H1 (cell line): ENCODE measurements at regions of chr18 and their contacts with region 1.

Region 1: GRCh38 chr18:3585656-3586509 is 135.9 kb downstream of the TGIF1 start:
- DNase-seq: peak; percentile 63 to 84
- H3K4me3 ChIP-seq: no peak overlapping the region
- H3K27ac ChIP-seq: no peak overlapping the region
- H3K4me1 ChIP-seq: peaks cover 3 to 13% (median 9%) of the 10 kb centered on the region in 4 experiments
- H3K27me3 ChIP-seq: no peaks in the 10 kb centered on the region
- CTCF ChIP-seq: peak; percentile 86 to 96 (median 91)
- EP300 ChIP-seq: no peak
- POLR2A ChIP-seq: no peak
- RAD21 ChIP-seq: peak; percentile 88 to 92

Region 2: DNA sequence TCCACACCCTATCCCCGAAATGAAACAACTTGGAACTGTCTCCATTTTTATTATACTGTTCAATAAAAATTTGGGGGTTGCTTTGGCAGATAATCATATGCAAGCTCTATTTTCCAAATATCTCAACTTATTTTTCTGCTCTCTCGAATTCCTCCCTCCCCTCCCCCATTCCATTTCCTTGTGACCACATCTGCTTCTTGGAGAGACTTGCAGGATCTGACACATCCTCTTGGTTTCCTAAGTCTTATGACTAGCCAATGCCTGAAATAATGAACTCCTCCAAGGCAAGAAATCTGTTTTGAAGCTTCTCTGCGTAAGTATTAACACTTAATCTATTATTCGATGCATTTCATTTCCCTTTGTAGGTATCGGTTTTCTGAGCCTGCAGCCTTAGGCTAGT is 119.8 kb before region 1 on chr18:
- CTCF ChIA-PET with region 1: interaction called, 42 read pairs
- POLR2A ChIA-PET with region 1: interaction called, 7 read pairs
- DNase-seq: no peak
- H3K4me3 ChIP-seq: no peak overlapping the region
- H3K27ac ChIP-seq: no peak overlapping the region
- H3K4me1 ChIP-seq: peaks cover 7 to 19% (median 9%) of the 10 kb centered on the region in 4 experiments; a peak in 6 of 7 replicates
- H3K27me3 ChIP-seq: no peaks in the 10 kb centered on the region
- CTCF ChIP-seq: no peak
- EP300 ChIP-seq: no peak
- POLR2A ChIP-seq: no peak
- RAD21 ChIP-seq: no peak

Region 3: DNA sequence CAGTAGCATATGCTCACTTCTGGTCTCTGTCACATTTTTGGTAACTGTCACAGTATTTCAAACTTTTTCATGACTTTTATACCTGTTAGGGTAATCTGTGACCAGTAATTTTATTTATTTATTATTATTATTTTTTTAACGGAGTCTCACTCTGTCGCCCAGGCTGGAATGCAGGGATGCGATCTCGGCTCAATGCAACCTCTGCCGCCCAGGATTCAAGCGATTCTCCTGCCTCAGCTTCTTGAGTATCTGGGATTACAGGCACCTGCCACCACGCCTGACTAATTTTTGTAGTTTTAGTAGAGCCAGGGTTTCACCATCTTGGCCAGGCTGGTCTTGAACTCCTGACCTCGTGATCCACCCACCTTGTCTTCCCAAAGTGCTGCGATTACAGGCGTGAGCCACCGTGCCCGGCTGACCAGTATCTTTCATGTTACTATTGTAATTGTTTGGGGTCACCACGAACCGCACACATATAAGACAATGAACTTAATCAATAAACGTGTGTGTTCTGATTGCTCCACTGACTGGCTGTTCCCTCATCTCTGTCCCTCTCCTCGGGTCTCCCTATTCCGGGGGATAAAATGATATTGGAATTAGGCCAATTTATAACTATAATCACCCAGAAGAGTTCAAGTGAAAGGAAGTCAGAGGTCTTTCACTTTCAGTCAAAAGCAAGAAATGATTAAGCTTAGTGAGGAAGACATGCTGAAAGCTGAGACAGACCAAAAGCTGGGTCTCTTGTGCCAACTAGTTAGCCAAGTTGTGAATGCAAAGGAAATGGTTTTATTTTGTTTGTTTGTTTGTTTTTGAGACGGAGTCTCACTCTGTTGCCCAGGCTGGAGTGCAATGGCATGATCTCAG is 113.0 kb before region 1 on chr18:
- CTCF ChIA-PET with region 1: interaction called, 42 read pairs
- POLR2A ChIA-PET with region 1: interaction called, 7 read pairs
- DNase-seq: no peak
- H3K4me3 ChIP-seq: no peak overlapping the region
- H3K27ac ChIP-seq: no peak overlapping the region
- H3K4me1 ChIP-seq: peaks cover 0 to 5% (median 4%) of the 10 kb centered on the region in 4 experiments; a peak in 5 of 7 replicates
- H3K27me3 ChIP-seq: no peaks in the 10 kb centered on the region
- CTCF ChIP-seq: no peak
- EP300 ChIP-seq: no peak
- POLR2A ChIP-seq: no peak
- RAD21 ChIP-seq: no peak

Region 4: DNA sequence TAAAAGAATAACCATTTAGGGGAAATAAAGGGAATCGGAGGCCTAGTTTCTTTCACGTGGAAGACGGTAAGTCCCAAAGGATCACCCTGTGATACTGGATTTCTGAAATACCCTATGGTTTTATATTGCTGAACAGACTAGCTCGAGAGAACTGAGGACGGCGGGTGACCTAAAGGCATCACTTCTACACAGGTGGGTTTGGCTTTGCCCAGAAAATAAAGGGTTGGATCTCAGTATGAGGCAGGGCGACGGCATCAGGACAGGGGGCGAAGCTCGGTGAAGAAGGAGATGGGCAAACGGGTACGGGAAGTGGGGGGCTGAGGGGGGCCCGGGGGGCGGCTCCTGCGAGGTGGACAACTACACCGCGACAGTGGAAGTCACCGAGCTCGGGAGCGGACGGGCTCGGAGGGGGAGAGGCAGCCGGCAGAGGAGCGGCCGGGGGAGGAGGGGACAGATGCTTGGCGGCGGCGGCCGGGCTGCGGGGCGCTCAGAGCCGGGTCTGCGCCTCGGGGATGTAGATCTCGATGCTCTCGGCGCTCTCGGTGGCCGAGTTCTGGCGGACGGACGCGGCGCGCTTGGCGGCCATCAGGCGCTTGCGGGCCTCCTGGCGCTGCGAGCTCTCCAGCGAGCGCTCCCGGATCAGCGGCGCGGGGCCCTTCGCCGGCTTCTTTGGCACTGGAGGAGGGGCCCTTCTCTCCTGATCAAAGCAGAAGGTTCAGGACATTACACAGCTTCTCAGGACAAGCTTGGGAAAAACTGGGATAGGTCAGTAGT is 87.0 kb before region 1 on chr18:
- CTCF ChIA-PET with region 1: interaction called, 6 read pairs
- POLR2A ChIA-PET with region 1: interaction called, 12 read pairs
- DNase-seq: peak in 1 of 2 experiments; percentile 78
- H3K4me3 ChIP-seq: peak overlapping the region; percentile 32 to 60 (median 37); a peak in 7 of 8 replicates
- H3K27ac ChIP-seq: no peak overlapping the region
- H3K4me1 ChIP-seq: peaks cover 1 to 13% (median 5%) of the 10 kb centered on the region in 4 experiments
- H3K27me3 ChIP-seq: no peaks in the 10 kb centered on the region; a peak in 3 of 7 replicates
- CTCF ChIP-seq: 0 out of 4 replicates have a peak, but pooled peaks of 1 of the 3 experiments have one; percentile 1
- EP300 ChIP-seq: no peak
- POLR2A ChIP-seq: no peak
- RAD21 ChIP-seq: no peak

Region 5: DNA sequence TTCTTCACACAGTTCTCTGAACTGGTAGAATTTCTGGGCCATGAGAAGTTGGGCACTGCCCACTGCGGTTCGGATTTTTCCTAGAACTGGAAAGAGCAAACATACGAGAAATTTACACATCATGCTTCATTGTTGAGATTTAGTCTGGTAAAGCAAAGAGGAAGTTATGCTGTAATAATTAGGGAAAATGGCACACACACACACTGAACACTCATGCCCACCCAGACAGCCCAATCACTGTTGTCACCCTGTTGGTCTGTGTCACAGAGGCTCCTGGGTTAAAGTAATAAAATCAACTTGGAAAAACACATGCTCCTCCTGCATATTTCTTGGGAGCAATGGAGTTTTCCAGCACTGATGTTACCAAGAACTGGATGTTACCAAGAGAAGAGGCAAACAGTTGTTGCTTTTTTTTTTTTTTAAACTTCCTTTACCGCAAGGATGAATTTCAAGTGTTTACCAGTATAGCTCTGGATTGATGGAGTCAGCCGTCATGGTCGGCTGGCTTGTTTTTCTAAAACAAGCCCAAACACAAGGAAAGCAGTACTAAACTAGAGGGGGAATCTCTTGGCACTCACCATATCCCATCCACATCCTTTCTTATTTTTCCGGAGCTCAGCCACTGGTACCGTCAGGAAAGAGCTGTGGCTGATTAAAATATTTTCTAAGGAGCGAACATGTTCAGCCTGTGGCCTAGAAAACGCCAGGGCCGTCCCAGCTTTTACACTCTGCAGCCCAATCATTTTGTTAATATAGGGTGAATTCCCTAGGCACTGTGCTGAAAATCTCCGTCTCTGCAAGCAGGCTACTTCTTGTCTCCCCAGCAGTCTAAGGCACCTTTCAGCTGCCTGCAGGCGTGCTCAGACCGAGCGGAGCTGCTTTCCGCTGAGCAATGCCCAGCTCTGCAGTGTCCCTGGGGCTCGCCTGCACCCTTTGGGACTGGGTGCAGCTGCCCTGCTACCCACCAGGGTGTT is 77.0 kb before region 1 on chr18:
- CTCF ChIA-PET with region 1: interaction called, 12 read pairs
- POLR2A ChIA-PET with region 1: no interaction called
- DNase-seq: no peak
- H3K4me3 ChIP-seq: no peak overlapping the region
- H3K27ac ChIP-seq: no peak overlapping the region
- H3K4me1 ChIP-seq: peaks cover 0 to 9% (median 0%) of the 10 kb centered on the region in 4 experiments; a peak in 3 of 7 replicates
- H3K27me3 ChIP-seq: no peaks in the 10 kb centered on the region; a peak in 1 of 7 replicates
- CTCF ChIP-seq: no peak
- EP300 ChIP-seq: no peak
- POLR2A ChIP-seq: no peak
- RAD21 ChIP-seq: no peak

Region 6: DNA sequence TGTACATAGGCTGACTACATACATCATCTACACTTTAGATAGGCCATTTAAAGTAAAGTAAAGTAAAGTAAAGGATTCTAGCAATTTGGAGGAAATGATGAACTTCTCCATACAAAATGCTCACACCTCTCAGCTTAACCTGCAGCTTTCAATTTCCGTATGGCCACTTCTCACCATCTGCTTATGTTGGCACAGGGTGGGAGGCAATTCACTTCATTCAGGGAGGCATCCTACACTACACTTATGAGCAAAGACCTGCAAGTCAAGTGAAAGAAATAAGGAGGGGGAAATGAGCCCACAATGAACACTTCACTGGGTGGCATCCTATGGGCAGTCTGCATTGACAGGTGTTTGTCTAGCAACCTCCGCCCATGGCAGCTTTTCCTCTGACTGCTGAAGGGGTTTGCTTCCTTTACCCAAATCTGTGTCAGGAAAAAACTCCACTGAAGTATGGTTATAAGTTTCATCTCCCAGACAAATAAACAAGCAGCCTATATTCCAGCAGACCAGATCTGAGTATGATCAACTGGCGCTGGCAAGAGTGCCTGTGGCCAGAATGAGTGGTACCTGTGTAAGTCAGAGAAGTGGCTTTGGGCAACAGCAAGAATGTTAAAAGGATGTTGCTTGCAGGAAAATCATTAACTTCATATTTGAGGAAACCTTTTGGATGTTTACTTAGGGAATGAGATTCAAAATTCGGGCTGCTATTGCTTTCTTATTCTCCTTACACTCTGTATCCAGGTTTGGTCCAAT is 313.2 kb after region 1 on chr18:
- CTCF ChIA-PET with region 1: no interaction called
- POLR2A ChIA-PET with region 1: no interaction called
- DNase-seq: no peak
- H3K4me3 ChIP-seq: no peak overlapping the region
- H3K27ac ChIP-seq: no peak overlapping the region
- H3K4me1 ChIP-seq: 0 out of 7 replicates have a peak, but pooled peaks cover 0 to 3% (median 0%) of the 10 kb centered on the region in 4 experiments
- H3K27me3 ChIP-seq: no peaks in the 10 kb centered on the region
- CTCF ChIP-seq: no peak
- EP300 ChIP-seq: no peak
- POLR2A ChIP-seq: no peak
- RAD21 ChIP-seq: no peak